ENCODE measurements at regions of chr19 and their contacts with region 1.

Region 1: GRCh38 chr19:39341719-39342604 is at the start of gene SAMD4B:
- DNase-seq: peak; percentile 99
- ATAC-seq: peak; percentile 97
- H3K4me3 ChIP-seq: peak within 1 kb of the TSS; percentile 92 to 99
- H3K27ac ChIP-seq: peak within 1 kb of the TSS; percentile 52 to 65
- H3K4me1 ChIP-seq: no peaks in the 10 kb centered on the region
- H3K27me3 ChIP-seq: no peaks in the 10 kb centered on the region
- total RNA-seq, gene SAMD4B: 101 to 120 TPM

Region 2: GRCh38 chr19:39125554-39126311 is 216.2 kb before region 1 on chr19 and contains the start of gene PAK4:
- intact Hi-C with region 1: loop called in 1 of 2 experiments (anchors 5 kb)
- DNase-seq: peak; percentile 98 to 99
- ATAC-seq: peak; percentile 97
- H3K4me3 ChIP-seq: peak within 1 kb of the TSS; percentile 63 to 69
- H3K27ac ChIP-seq: no peak within 1 kb of the TSS
- H3K4me1 ChIP-seq: no peaks in the 10 kb centered on the region
- H3K27me3 ChIP-seq: no peaks in the 10 kb centered on the region
- total RNA-seq, gene PAK4: 15.9 to 22.2 TPM

Region 3: GRCh38 chr19:39237200-39238184 is 104.5 kb before region 1 on chr19:
- intact Hi-C with region 1: no loop called
- DNase-seq: no peak
- ATAC-seq: no peak
- H3K4me3 ChIP-seq: no peak overlapping the region
- H3K27ac ChIP-seq: no peak overlapping the region
- H3K4me1 ChIP-seq: no peaks in the 10 kb centered on the region
- H3K27me3 ChIP-seq: no peaks in the 10 kb centered on the region

Region 4: GRCh38 chr19:39390755-39391592 is 49.0 kb after region 1 on chr19 and contains the starts of genes MED29 and PAF1:
- intact Hi-C with region 1: loop called in 1 of 2 experiments (anchors 1 kb)
- DNase-seq: peak; percentile 98
- ATAC-seq: peak; percentile 98
- H3K4me3 ChIP-seq: peak within 1 kb of the TSS; percentile 84 to 90
- H3K27ac ChIP-seq: peak within 1 kb of the TSS; percentile 89 to 92
- H3K4me1 ChIP-seq: no peaks in the 10 kb centered on the region
- H3K27me3 ChIP-seq: no peaks in the 10 kb centered on the region
- total RNA-seq, gene MED29: 28.9 to 35.1 TPM
- total RNA-seq, gene PAF1: 33.9 to 34.5 TPM

Region 5: DNA sequence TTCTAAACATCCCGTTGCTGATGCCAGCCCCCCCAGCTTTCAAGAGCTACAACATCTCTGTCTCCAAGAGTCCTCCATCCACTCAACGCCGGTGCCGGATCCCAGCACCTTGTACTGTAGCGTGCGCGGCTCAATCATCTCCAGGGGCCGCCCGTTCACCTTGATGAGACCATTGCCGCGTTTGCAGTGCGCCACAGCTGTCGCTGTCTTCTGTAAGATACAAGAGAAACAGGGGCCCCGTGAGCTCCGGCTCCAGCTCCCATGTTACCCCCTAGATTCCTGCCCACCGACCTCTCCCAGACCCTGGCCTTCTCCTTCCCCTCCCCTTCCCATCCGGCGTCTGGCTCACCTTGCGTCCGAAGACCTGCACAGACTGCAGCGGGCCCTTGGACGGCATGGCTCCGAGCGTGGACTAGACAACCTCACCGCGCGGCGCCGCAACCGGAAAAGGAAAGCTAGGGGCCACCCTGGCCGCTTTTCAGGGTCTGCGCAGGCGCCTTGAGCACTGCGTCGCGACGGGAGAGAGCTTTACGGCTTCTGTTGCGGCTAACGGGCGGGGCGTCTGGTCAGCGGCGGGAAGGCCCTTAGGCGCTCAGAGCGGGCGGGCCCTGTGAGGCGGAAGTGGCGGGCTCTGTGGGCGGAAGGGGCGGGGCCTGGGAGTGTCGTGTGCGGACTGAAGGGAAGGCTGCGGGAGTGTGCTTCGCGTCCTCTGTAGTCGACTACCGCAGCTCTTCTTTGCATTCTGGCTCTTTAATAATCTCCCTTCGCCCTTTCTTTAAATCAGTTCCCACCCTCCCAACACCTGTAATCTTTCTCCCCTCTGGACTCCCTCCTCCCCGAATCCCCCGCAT is 93.8 kb after region 1 on chr19 and contains the start of gene RPS16:
- intact Hi-C with region 1: no loop called
- DNase-seq: peak; percentile 99 to 100
- ATAC-seq: peak; percentile 99
- H3K4me3 ChIP-seq: peak within 1 kb of the TSS; percentile 31 to 61
- H3K27ac ChIP-seq: peak within 1 kb of the TSS in 1 of 2 donors; percentile 49
- H3K4me1 ChIP-seq: peaks cover 0 to 2% of the 10 kb centered on the region in 2 donors
- H3K27me3 ChIP-seq: no peaks in the 10 kb centered on the region
- total RNA-seq, gene RPS16: 1,268 to 1,273 TPM

Measured in aorta (tissue), 5 donors.